Psoas muscle (tissue), 8 donors: ENCODE measurements at regions of chr11 and their contacts with region 1.

Region 1: GRCh38 chr11:128399251-128400121 is 187.9 kb downstream of the ETS1 start:
- DNase-seq: no peak
- ATAC-seq: peak; percentile 81 to 96 (median 94)
- H3K4me3 ChIP-seq: no peak overlapping the region
- H3K27ac ChIP-seq: peak overlapping the region; percentile 78
- H3K4me1 ChIP-seq: peaks cover 22% of the 10 kb centered on the region
- H3K27me3 ChIP-seq: no peaks in the 10 kb centered on the region
- CTCF ChIP-seq: no peak

Region 2: DNA sequence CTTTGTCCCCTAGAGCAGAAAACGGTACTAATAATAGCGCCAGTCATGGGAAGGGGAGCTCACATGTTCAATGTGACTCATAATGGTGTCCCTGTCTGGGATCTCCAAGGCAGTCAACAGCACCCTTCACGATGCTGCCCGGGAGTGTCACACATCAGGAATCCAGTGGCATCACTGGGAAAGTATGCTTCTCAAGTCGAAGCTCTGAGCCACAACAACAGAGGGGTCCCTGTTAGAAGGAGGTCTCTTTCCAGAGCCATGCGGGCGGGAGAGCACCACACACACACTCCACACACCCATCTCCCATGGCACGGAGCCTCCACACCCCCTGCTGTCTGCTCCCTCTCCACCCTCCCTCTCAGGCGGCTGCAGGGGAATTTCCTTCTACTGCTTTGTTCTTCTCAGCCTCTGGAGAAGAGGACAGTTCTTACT is 68.1 kb after region 1 on chr11:
- intact Hi-C with region 1: loop called in 1 of 2 experiments (anchors 10 kb)
- DNase-seq: peak; percentile 49 to 60
- ATAC-seq: peak; percentile 85 to 92 (median 90)
- H3K4me3 ChIP-seq: no peak overlapping the region
- H3K27ac ChIP-seq: peak overlapping the region; percentile 51
- H3K4me1 ChIP-seq: peaks cover 23% of the 10 kb centered on the region
- H3K27me3 ChIP-seq: no peaks in the 10 kb centered on the region
- CTCF ChIP-seq: no peak

Region 3: DNA sequence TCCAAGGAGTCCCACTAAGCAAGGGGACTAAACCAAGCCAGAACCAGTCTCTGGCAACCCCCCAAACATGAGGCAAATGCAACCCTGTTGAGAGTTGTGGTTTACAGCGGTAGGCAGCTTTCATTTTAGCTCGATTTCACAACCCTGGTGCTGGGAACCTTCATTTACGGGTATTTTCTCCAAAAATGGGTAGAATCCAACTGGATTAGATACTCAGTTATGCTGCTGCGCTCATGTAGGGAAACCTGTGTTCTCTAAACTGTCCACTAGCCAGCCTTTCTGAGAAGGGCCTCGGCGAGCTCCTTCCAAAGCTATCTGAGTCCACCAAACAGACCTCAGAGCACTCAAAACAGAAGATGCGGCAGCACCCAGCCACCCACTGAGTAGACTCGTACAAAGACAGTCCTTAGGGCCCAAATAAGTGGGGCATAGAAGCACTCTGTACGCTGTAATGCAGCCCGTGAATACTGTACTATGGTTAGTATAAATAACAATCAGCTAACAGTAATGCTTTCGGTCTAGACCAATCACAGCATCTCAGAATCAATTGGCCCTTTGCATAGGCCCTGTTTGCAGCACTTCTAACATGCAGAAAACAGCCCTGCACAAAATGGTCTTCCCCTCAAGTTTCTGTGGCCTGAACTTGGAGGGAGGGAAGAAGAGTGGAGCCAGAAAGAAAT is 83.2 kb after region 1 on chr11:
- intact Hi-C with region 1: no loop called
- DNase-seq: peak; percentile 67 to 70
- ATAC-seq: peak; percentile 64 to 78 (median 73)
- H3K4me3 ChIP-seq: peak overlapping the region; percentile 45
- H3K27ac ChIP-seq: peak overlapping the region; percentile 57
- H3K4me1 ChIP-seq: peaks cover 39% of the 10 kb centered on the region
- H3K27me3 ChIP-seq: no peaks in the 10 kb centered on the region
- CTCF ChIP-seq: no peak

Region 4: GRCh38 chr11:128497061-128497775 is 97.7 kb after region 1 on chr11:
- intact Hi-C with region 1: loop called in 1 of 2 experiments (anchors 1 kb)
- DNase-seq: peak; percentile 47 to 64
- ATAC-seq: peak; percentile 66 to 74 (median 70)
- H3K4me3 ChIP-seq: peak overlapping the region; percentile 53
- H3K27ac ChIP-seq: peak overlapping the region; percentile 79
- H3K4me1 ChIP-seq: peaks cover 88% of the 10 kb centered on the region
- H3K27me3 ChIP-seq: no peaks in the 10 kb centered on the region
- CTCF ChIP-seq: no peak